H1 (cell line): ENCODE measurements at regions of chr7 and their contacts with region 1.

Region 1: DNA sequence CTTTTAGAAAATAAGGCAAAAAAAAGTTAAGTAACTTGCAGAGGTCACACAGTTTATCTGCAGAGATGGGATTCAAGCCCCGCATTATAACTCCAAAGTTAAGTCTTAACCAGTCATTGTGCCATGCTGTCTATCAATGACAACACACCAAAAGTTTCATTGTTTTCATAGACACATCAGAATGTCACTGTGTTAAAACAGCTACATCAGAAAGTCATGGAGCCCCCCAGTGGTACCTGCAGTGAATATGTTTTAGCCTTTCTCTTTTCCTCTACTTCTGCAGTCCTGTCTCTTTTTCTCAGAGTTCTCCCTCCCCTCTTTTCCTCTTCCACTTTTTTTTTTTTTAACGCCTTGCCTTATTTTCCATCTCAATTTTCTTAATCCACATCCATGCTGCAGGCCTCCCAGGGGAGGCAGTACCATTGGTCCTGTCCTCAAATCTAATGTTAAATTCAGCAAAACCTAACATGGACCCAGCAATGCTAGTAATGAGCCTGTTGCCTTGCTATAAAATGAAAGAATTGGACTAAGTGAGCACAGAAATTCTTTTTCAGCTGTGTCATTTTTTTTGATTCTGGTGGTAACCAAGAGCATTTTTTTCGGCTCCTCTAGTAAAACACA is 3.8 kb upstream of the NRCAM start:
- DNase-seq: no peak
- H3K4me3 ChIP-seq: no peak overlapping the region
- H3K27ac ChIP-seq: no peak overlapping the region
- H3K4me1 ChIP-seq: peaks cover 0 to 2% (median 0%) of the 10 kb centered on the region in 4 experiments; a peak in 1 of 7 replicates
- H3K27me3 ChIP-seq: peaks cover 3 to 25% (median 21%) of the 10 kb centered on the region in 4 experiments
- CTCF ChIP-seq: peak in 2 of 3 experiments; percentile 33 to 48; a peak in 2 of 4 replicates
- EP300 ChIP-seq: no peak
- POLR2A ChIP-seq: no peak
- RAD21 ChIP-seq: peak; percentile 62 to 64

Region 2: GRCh38 chr7:108475598-108475997 is 15.6 kb after region 1 on chr7:
- CTCF ChIA-PET with region 1: interaction called, 10 read pairs
- POLR2A ChIA-PET with region 1: no interaction called
- DNase-seq: no peak
- H3K4me3 ChIP-seq: no peak overlapping the region
- H3K27ac ChIP-seq: no peak overlapping the region
- H3K4me1 ChIP-seq: 0 out of 7 replicates have a peak, but pooled peaks cover 0 to 2% (median 0%) of the 10 kb centered on the region in 4 experiments
- H3K27me3 ChIP-seq: no peaks in the 10 kb centered on the region
- CTCF ChIP-seq: no peak
- EP300 ChIP-seq: no peak
- POLR2A ChIP-seq: no peak
- RAD21 ChIP-seq: no peak

Region 3: DNA sequence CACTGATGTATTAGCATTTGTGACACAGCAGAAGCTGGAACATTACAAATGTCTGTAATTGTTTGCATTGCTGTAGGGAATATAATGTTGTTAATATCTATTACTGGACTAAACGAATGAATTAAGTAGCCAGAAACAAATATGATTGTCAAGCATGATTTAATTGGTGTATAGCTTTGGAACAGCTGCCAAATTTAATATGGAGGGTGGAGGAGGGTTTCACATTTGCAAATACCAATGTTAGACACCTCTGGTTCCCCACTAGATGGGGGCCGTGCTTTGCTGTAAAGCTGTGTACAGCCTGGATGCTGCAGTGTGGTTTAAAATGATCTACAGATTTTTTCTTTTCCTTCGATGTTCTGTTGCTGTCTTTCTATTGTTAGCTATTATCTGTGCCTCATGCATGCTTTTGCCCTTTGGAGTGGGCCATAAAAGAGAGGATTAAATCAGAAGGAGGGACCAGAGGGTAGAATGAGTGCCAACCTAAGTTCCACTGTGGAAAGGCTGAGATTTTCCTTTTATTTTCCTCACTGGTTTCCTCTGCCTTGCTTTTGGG is 132.7 kb after region 1 on chr7:
- CTCF ChIA-PET with region 1: no interaction called
- POLR2A ChIA-PET with region 1: no interaction called
- DNase-seq: no peak
- H3K4me3 ChIP-seq: no peak overlapping the region
- H3K27ac ChIP-seq: no peak overlapping the region
- H3K4me1 ChIP-seq: peaks cover 0 to 8% (median 3%) of the 10 kb centered on the region in 4 experiments; a peak in 4 of 7 replicates
- H3K27me3 ChIP-seq: no peaks in the 10 kb centered on the region
- CTCF ChIP-seq: peak in 1 of 3 experiments; percentile 21; a peak in 1 of 4 replicates
- EP300 ChIP-seq: no peak
- POLR2A ChIP-seq: no peak
- RAD21 ChIP-seq: peak; percentile 47 to 55

Region 4: DNA sequence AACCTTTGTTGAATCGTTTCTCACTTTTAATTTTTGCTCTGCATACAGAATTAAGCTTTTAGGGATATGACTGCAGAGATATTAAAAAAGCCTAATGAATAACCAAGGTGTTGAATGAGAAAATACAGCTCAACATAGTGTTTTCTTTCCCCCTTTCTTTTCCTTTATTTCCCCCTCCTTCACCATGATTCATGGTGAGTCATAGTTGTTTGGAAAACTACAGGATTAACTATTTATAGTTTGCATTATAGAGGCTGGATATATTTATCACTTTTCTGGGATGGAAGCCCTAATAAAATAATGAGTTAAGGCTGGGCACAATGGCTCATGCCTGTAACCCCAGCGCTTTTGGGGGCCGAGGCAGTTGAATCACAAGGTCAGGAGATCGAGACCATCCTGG is 224.6 kb after region 1 on chr7:
- CTCF ChIA-PET with region 1: no interaction called
- POLR2A ChIA-PET with region 1: no interaction called
- DNase-seq: no peak
- H3K4me3 ChIP-seq: no peak overlapping the region
- H3K27ac ChIP-seq: no peak overlapping the region
- H3K4me1 ChIP-seq: no peaks in the 10 kb centered on the region
- H3K27me3 ChIP-seq: no peaks in the 10 kb centered on the region
- CTCF ChIP-seq: no peak
- EP300 ChIP-seq: no peak
- POLR2A ChIP-seq: no peak
- RAD21 ChIP-seq: no peak